ENCODE measurements at regions of chr1 and their contacts with region 1.

Region 1: DNA sequence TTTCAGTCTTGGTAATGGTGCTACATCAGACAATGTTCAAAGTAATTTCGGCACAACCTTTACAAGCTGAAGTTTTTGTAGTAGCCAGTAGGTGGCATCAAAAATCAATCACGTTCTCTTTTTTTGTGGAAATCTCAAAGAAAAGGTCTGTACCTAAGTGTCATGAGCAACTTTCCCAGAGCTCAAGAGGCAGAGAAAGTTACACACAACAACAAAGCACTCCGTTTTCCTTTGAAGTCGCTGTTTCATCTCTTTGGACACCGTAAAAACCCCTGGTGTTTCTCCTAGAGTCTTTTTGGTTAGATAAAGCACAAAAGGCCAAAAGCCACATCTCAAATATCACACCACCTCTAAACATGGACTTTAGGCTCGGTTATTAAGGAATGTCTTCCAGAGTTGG is 131.6 kb downstream of the LHX8 start:
- DNase-seq: no peak
- ATAC-seq: no peak
- H3K4me3 ChIP-seq: no peak overlapping the region
- H3K27ac ChIP-seq: no peak overlapping the region
- H3K4me1 ChIP-seq: peaks cover 0 to 4% of the 10 kb centered on the region in 2 donors
- H3K27me3 ChIP-seq: no peaks in the 10 kb centered on the region
- CTCF ChIP-seq: peak in 4 of 5 experiments; percentile 18 to 55 (median 44)
- POLR2A ChIP-seq: no peak

Region 2: DNA sequence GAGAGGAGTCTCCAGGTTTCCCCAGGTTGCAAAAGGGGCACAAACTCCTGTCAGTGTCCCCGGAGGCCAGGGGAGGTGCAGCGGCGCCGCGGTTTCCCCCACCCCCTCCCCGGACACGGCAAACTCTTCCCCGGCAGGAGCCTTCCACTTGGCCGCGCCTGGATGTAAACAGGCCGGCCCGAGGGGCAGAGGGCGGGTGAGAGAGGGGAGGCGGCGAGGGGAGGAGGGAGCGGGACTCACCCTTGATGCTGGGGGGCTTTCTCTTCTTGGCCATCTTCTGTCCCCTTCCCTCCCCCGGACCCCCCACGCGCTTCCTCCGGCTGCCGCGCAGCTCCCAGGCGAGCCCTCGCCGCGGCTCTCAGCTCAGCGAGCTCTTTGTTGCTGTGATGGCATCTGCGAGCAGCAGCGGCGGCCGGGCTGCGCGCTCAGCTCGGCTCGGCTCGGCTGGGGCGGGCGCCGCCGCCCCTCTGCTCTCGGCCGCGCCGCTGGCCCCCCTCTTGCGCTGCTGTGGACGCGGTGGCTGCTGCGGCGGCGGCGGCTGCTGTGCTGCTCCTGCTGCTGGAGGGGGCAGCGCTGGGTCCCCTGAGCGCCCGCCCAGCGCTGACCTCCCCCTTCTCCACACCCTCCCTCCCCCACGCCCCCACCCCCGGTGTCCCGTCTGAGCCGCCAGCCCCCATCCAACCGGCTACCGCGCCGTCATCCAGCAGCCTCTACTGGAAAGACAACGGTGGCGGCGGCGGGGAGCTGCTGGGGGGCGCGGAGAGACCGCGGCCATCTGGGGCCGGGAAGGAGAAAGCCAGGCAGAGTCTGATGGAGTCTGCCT is 350.0 kb after region 1 on chr1:
- in situ Hi-C with region 1: loop called in 1 of 4 experiments (anchors 25 kb)
- intact Hi-C with region 1: no loop called
- DNase-seq: no peak
- ATAC-seq: peak in 1 of 2 donors; percentile 59
- H3K4me3 ChIP-seq: peak overlapping the region; percentile 48 to 60 (median 56)
- H3K27ac ChIP-seq: no peak overlapping the region
- H3K4me1 ChIP-seq: peaks cover 14 to 21% of the 10 kb centered on the region in 2 donors
- H3K27me3 ChIP-seq: peaks cover 37 to 67% (median 44%) of the 10 kb centered on the region in 3 donors
- CTCF ChIP-seq: no peak
- POLR2A ChIP-seq: no peak